ENCODE measurements at regions of chr6 and their contacts with region 1.

Region 1: DNA sequence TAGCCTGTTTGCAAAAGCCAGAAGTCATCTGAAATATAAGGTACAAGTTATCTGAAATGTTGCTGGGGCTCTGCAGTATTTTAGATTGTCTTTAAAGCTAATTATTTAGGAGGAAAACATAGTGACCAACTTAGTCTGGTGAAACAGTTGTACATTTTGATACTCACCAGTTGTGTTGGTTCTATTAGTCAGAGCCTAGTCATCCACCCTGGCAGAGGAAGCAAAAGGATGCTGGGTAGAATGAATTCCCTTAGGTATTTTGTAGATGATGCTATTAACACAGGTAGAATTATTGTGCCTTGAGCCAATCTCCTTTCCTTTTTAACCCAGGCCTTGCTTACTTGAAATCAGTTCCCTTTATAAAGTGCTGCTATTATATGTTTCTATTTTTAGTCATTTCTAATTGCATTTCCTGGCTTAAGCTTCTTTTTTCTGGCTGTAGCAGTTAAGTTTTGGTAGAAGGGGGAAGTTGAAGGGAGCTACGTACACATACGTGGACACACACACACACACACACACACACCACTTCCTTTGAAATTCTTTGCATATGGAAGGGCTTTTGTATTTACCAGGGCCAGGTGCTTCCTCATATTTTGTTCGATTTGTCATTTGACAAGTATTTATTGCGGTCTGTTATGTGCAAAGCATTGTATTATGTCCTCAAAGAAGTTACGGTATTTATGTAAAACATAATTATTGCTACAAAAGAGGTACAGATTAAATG is 82.4 kb downstream of the RTN4IP1 start:
- DNase-seq: peak; percentile 51
- H3K4me3 ChIP-seq: no peak overlapping the region
- H3K27ac ChIP-seq: peak overlapping the region; percentile 71
- H3K4me1 ChIP-seq: peaks cover 27% of the 10 kb centered on the region
- H3K27me3 ChIP-seq: no peaks in the 10 kb centered on the region
- CTCF ChIP-seq: no peak

Region 2: DNA sequence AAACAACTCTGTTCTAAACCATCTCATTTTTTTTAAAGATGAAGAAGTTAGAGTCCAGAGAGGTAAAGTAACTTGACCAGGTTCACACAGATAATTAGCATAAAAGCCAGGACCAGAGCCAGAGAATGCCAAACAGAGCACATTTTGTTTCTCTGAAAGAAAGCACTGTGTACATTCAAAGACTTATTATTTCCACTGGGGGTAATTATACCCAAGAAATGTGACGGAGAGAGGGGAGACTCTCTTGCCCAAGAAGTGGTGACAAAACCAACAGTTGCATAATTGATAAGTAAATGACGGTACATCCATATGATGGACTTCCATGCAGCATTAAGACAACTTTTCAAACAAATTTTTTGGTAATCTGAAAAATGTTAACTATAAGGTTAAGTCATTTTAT is 29.1 kb before region 1 on chr6:
- CTCF ChIA-PET with region 1: interaction called, 5 read pairs
- POLR2A ChIA-PET with region 1: interaction called, 10 read pairs
- intact Hi-C with region 1: no loop called
- DNase-seq: no peak
- H3K4me3 ChIP-seq: no peak overlapping the region
- H3K27ac ChIP-seq: no peak overlapping the region
- H3K4me1 ChIP-seq: peaks cover 19% of the 10 kb centered on the region
- H3K27me3 ChIP-seq: no peaks in the 10 kb centered on the region
- CTCF ChIP-seq: no peak

Measured in A673 (cell line).